Ascending aorta (tissue), 2 donors: ENCODE measurements at regions of chr5 and their contacts with region 1.

Region 1: GRCh38 chr5:66306105-66306843 is 162.2 kb downstream of the SREK1 start:
- DNase-seq: no peak
- H3K4me3 ChIP-seq: no peak overlapping the region
- H3K27ac ChIP-seq: no peak overlapping the region
- H3K4me1 ChIP-seq: no peaks in the 10 kb centered on the region
- H3K27me3 ChIP-seq: no peaks in the 10 kb centered on the region
- CTCF ChIP-seq: peak; percentile 38 to 67 (median 62)

Region 2: GRCh38 chr5:66757188-66757833 is 451.0 kb after region 1 on chr5:
- intact Hi-C with region 1: loop called (anchors 2 kb)
- DNase-seq: no peak
- H3K4me3 ChIP-seq: no peak overlapping the region
- H3K27ac ChIP-seq: no peak overlapping the region
- H3K4me1 ChIP-seq: peaks cover 0 to 2% of the 10 kb centered on the region in 2 donors
- H3K27me3 ChIP-seq: no peaks in the 10 kb centered on the region
- CTCF ChIP-seq: peak in 1 of 3 experiments; percentile 42

Region 3: DNA sequence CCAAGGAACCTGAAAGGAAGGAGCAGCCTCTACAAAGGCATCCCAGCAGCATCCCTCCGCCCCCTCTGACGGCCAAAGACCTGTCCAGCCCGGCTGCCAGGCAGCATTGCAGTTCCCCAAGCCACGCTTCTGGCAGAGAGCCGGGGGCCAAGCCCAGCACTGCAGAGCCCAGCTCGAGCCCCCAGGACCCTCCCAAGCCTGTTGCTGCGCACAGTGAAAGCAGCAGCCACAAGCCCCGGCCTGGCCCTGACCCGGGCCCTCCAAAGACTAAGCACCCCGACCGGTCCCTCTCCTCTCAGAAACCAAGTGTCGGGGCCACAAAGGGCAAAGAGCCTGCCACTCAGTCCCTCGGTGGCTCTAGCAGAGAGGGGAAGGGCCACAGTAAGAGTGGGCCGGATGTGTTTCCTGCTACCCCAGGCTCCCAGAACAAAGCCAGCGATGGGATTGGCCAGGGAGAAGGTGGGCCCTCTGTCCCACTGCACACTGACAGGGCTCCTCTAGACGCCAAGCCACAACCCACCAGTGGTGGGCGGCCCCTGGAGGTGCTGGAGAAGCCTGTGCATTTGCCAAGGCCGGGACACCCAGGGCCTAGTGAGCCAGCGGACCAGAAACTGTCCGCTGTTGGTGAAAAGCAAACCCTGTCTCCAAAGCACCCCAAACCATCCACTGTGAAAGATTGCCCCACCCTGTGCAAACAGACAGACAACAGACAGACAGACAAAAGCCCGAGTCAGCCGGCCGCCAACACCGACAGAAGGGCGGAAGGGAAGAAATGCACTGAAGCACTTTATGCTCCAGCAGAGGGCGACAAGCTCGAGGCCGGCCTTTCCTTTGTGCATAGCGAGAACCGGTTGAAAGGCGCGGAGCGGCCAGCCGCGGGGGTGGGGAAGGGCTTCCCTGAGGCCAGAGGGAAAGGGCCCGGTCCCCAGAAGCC is 859.5 kb after region 1 on chr5:
- intact Hi-C with region 1: no loop called
- DNase-seq: peak; percentile 47 to 93
- H3K4me3 ChIP-seq: peak overlapping the region; percentile 40 to 59
- H3K27ac ChIP-seq: peak overlapping the region; percentile 74 to 87
- H3K4me1 ChIP-seq: peaks cover 0 to 13% of the 10 kb centered on the region in 2 donors
- H3K27me3 ChIP-seq: no peaks in the 10 kb centered on the region
- CTCF ChIP-seq: peak; percentile 72 to 89 (median 81)